ENCODE measurements at regions of chr5 and their contacts with region 1.

Region 1: DNA sequence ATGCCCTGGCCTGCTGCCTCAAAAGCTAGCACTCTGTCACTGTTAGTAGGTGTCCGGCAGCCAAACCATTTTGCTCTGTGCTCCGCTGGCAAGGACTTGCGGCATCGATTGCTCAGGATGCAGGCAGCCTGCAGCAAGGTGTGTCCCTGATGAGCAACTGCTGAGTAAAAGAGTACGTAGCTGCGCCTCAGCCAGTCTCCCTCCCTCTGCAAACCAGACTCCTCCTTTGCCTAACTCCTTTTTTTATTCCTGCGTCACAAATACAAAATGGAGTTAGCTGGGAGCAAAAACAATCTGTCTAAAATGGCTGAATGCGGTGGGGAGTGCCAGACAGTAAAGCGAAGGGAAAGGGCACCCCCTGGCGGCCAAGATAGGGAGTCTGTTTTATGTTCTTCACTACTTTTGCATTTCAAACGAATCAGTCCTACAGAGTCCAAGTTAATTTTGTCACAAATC is 61.1 kb downstream of the DIAPH1 start:
- DNase-seq: peak; percentile 50 to 82 (median 73)
- ATAC-seq: peak; percentile 41 to 55 (median 51)
- H3K4me3 ChIP-seq: no peak overlapping the region
- H3K27ac ChIP-seq: peak overlapping the region in 2 of 4 donors; percentile 91 to 93
- H3K4me1 ChIP-seq: peaks cover 12 to 21% (median 20%) of the 10 kb centered on the region in 3 donors
- H3K27me3 ChIP-seq: no peaks in the 10 kb centered on the region
- CTCF ChIP-seq: peak; percentile 54 to 68 (median 61)

Region 2: DNA sequence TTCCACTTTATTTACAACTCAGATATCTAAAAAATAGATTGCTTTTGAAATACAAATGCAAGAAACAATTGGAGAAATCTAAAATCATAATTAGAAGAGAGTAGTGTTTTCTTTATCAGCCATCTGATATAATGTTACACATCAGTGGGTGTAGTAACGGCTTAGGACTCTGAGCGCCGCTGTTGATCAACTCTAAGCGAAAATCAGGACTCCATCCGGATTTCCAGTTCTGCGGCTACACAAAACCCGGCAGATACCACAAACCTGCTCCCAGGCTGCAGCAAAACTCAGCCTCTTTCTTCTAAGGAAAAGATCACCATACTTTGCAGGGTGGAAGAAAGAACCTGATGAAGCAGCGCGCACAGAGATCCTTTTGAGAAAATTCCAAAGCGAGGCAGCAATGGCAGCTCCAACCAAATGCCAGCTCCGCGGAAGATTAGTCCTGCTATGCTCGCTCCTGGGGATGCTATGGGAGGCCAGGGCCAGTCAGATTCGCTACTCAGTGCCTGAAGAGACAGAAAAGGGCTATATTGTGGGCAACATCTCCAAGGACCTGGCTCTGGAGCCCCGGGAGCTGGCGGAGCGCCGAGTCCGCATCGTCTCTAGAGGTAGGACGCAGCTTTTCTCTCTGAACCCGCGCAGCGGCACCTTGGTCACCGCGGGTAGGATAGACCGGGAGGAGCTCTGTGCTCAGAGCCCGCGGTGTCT is 155.0 kb before region 1 on chr5 and contains the start of gene PCDHGA9:
- intact Hi-C with region 1: loop called in 1 of 3 experiments (anchors 10 kb)
- DNase-seq: peak in 1 of 6 donors; percentile 36
- ATAC-seq: peak in 2 of 4 donors; percentile 29 to 45
- H3K4me3 ChIP-seq: peak within 1 kb of the TSS in 1 of 4 donors; percentile 18
- H3K27ac ChIP-seq: no peak within 1 kb of the TSS
- H3K4me1 ChIP-seq: peaks cover 0 to 2% (median 0%) of the 10 kb centered on the region in 3 donors
- H3K27me3 ChIP-seq: no peaks in the 10 kb centered on the region
- CTCF ChIP-seq: no peak
- total RNA-seq, gene PCDHGA9: 1.4 to 3.0 (median 2.3) TPM

Region 3: DNA sequence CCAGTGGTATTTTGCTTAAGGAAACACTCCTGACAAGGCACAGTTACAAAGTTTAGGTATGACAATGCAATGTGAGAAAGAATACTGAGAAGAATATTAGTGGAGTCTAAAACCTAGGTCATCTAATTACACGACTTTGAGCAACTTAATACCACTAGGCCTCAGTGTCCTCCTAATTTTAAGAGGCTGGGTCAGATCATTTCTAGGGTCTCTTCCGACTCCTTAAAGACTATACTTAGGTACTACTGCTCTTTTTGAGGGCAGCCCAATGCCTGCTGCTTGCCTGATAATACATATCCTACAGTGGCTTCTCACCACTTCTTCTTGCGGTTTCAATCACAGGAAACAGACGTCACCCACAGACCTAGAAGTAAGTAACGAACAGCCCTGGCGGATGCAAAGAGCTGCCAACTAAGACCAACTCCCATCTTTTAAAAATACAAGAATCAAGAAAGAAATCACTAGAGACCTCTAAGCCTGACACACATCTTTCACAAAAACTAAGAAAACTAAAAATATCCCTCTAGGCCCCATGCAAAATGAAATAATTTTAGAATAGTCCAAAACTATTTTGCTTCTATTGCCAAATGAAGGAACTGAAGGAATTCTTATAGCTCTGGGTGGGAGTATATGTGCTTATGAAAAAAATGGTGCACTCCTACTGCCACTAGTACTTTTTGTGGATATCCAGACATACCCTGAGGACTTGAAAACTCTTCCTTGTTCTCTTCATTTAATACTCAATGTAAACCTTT is 48.0 kb after region 1 on chr5:
- intact Hi-C with region 1: no loop called
- DNase-seq: peak in 1 of 6 donors; percentile 38
- ATAC-seq: peak in 3 of 4 donors; percentile 30 to 52 (median 46)
- H3K4me3 ChIP-seq: no peak overlapping the region
- H3K27ac ChIP-seq: peak overlapping the region in 2 of 4 donors; percentile 9 to 18
- H3K4me1 ChIP-seq: peaks cover 14 to 61% (median 33%) of the 10 kb centered on the region in 3 donors
- H3K27me3 ChIP-seq: no peaks in the 10 kb centered on the region
- CTCF ChIP-seq: no peak

Region 4: DNA sequence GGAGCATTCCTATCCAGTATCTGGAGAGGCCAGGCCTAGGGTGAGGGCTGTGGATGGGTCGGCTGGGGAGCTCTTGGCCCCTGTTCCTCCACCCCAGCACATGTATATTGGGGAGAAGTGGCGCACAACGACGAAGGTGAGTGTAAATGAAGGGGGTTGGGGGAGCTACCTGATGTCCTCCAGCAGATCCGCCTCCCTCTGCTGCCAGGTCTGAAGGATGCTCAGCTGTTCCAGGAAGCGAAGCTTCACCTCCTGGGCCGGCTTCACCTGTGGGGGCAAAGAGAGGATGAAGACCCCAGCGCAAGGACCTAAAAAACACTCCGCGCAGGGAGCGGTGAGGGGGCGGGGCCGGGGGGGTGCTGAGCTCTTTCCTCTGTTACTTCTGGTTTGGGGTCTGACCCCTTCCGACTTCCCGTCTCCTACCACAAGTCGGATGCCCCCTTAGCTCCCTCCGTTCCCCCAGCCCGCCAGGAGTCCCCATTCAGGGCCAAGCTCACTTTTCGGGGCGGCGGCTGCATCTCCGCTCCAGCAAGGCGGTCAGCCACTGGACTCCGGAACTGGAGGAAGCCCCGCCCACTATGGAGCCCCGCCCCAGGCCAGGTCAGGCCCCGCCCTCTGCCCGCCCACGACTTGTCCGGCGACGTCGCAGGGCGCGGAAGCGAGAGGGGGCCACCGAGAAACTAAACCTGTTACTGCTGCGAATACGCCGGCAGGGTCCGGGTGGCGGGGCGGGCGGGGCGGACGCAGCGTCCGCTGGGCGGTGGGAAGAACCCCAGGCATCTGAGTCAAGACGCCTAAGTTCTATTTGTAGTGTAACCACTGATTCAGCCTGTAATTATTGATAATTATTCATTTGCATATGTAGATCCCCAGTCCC is 93.4 kb after region 1 on chr5 and contains the start of gene FCHSD1:
- intact Hi-C with region 1: no loop called
- DNase-seq: peak; percentile 86 to 97 (median 92)
- ATAC-seq: peak; percentile 97 to 99 (median 98)
- H3K4me3 ChIP-seq: peak within 1 kb of the TSS; percentile 37 to 78 (median 66)
- H3K27ac ChIP-seq: peak within 1 kb of the TSS in 1 of 4 donors; percentile 11
- H3K4me1 ChIP-seq: no peaks in the 10 kb centered on the region
- H3K27me3 ChIP-seq: no peaks in the 10 kb centered on the region
- CTCF ChIP-seq: no peak
- total RNA-seq, gene FCHSD1: 4.8 to 18.3 (median 7.7) TPM

Measured in pancreas (tissue), 10 donors.